ENCODE measurements at regions of chr12 and their contacts with region 1.

Region 1: GRCh38 chr12:14239350-14239934 is 126.0 kb upstream of the ATF7IP start:
- DNase-seq: peak; percentile 60
- H3K4me3 Mint-ChIP-seq: peak overlapping the region; percentile 68
- H3K27ac Mint-ChIP-seq: peak overlapping the region; percentile 79
- H3K4me1 Mint-ChIP-seq: peaks cover 20% of the 10 kb centered on the region
- H3K27me3 Mint-ChIP-seq: no peaks in the 10 kb centered on the region

Region 2: DNA sequence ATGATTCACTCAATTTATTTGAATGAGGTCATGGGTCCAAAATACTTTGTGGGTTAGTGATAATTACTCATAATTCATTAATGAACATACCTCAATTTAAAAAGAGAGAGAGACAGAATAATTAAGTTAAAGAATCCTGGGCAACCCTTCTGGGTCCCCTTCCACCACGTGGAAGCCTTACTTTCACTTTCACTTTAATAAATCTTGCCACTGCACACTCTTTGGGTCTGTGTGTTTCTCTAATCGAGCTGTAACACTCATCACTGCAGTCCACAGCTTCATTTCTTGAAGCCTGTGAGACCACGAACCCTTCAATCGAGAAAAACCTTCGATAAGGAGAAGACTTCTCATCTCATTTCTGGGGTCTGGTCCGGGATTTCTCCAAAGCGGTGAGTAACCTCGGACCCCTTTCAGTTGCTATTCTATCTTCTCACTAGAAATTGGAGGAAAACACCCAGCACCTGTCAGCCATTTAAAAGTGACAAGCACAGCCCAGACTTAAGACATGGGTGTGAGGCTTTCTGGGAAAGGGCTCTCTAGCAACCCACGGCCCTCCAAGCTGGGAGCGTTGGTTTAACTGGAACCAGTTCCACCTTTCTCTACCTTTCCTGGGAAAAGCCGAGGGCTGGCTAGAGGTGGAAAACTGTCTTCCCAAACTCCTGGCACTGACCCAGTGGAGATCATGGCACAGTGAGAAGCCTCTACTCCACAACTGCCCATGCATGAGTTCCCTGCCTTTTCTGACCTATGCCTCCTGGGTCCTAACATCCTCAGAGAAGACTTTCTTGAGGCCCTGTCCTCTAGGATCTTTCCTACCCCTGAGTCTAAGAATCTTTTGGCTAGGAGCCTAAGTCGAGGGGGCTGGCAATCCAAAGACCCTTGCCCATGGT is 22.8 kb before region 1 on chr12:
- CTCF ChIA-PET with region 1: interaction called, 6 read pairs
- intact Hi-C with region 1: loop called (anchors 1 kb)
- DNase-seq: no peak
- H3K4me3 Mint-ChIP-seq: no peak overlapping the region
- H3K27ac Mint-ChIP-seq: peak overlapping the region; percentile 70
- H3K4me1 Mint-ChIP-seq: peaks cover 24% of the 10 kb centered on the region
- H3K27me3 Mint-ChIP-seq: no peaks in the 10 kb centered on the region

Region 3: GRCh38 chr12:14257734-14258574 is 18.5 kb after region 1 on chr12:
- CTCF ChIA-PET with region 1: interaction called, 19 read pairs
- intact Hi-C with region 1: loop called (anchors 1 kb)
- DNase-seq: peak; percentile 99
- H3K4me3 Mint-ChIP-seq: peak overlapping the region; percentile 73
- H3K27ac Mint-ChIP-seq: peak overlapping the region; percentile 98
- H3K4me1 Mint-ChIP-seq: peaks cover 53% of the 10 kb centered on the region
- H3K27me3 Mint-ChIP-seq: no peaks in the 10 kb centered on the region

Region 4: GRCh38 chr12:14454098-14454907 is 214.9 kb after region 1 on chr12:
- CTCF ChIA-PET with region 1: interaction called, 13 read pairs
- intact Hi-C with region 1: loop called (anchors 1 kb)
- DNase-seq: peak; percentile 31
- H3K4me3 Mint-ChIP-seq: no peak overlapping the region
- H3K27ac Mint-ChIP-seq: peak overlapping the region; percentile 82
- H3K4me1 Mint-ChIP-seq: peaks cover 54% of the 10 kb centered on the region
- H3K27me3 Mint-ChIP-seq: no peaks in the 10 kb centered on the region

Region 5: DNA sequence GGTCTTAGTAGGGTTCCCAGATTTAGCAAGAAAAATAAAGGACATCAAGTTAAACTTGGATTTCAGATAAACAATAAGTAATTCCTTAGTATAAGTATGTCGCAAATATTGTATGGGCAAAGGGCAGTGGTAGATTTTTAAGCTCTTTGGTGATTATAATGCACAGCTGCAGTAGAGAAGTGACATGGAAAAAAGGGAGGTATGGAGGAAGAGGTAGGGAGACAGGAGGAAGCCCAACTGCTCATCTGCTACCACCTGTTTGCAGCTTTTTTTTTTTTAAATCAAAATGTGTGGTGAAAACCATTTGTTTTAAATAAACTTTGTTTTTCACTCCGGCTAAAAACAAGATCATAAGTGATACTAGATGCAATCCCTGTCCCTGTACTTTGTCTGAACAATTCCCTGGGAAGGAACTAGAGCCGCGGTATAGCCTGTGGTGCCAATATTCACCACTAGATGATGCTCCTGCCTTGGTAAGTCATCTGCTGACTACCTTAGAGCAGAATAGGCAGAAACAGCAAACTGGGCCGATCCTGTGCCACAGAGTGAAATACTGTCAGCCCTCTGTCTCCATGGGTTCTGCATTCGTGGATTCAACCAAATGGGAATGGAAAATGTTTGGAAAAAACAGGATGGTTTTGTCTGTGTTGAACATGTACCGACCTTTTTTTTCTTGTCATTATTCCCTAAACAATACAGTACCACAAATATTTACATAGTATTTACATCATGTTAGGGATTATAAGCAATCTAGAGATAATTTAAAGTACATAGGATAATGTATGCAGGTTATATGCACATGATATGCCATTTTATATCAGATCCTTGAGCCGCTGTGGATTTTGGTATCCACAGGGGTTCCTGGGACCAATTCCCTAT is 390.6 kb after region 1 on chr12:
- CTCF ChIA-PET with region 1: interaction called, 15 read pairs
- intact Hi-C with region 1: loop called (anchors 1 kb)
- DNase-seq: peak; percentile 79
- H3K4me3 Mint-ChIP-seq: no peak overlapping the region
- H3K27ac Mint-ChIP-seq: no peak overlapping the region
- H3K4me1 Mint-ChIP-seq: no peaks in the 10 kb centered on the region
- H3K27me3 Mint-ChIP-seq: no peaks in the 10 kb centered on the region

Region 6: DNA sequence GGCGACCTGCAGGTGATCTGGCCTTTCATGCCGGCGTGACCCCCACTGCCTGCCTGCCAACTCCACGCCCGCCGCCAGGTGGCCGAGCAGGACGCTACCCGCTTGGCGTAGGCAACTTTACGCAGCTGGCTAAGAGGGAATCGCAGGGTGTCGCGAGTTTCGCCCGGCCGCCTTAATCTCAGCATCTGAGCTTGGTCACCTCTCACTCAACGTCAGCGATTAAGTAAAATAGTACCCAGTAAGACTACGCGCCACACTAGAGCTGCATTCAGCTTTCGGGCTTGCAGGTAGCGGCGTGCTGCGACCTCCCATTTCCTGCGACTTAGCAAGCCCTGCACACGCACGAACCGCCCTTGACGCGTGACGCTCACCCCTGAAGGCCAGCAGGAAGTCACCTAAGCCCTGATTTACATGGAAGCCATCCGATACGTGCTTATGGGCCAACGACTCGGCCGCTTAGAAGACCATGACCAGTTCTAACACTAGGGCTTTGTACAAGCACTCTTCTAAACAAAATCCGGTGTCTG is 530.6 kb after region 1 on chr12:
- CTCF ChIA-PET with region 1: no interaction called
- intact Hi-C with region 1: loop called (anchors 2 kb)
- DNase-seq: peak; percentile 89
- H3K4me3 Mint-ChIP-seq: peak overlapping the region; percentile 97
- H3K27ac Mint-ChIP-seq: peak overlapping the region; percentile 98
- H3K4me1 Mint-ChIP-seq: peaks cover 38% of the 10 kb centered on the region
- H3K27me3 Mint-ChIP-seq: no peaks in the 10 kb centered on the region